ENCODE measurements at regions of chr21 and their contacts with region 1.

Region 1: GRCh38 chr21:31088315-31088714 is 50.0 kb upstream of the KRTAP19-8 start:
- DNase-seq: peak in 1 of 5 donors; percentile 26
- ATAC-seq: no peak
- H3K4me3 ChIP-seq: no peak overlapping the region
- H3K27ac ChIP-seq: no peak overlapping the region
- H3K4me1 ChIP-seq: peaks cover 0 to 5% (median 0%) of the 10 kb centered on the region in 12 donors
- H3K27me3 ChIP-seq: peaks cover 0 to 2% (median 0%) of the 10 kb centered on the region in 9 donors
- CTCF ChIP-seq: no peak
- POLR2A ChIP-seq: no peak

Region 2: GRCh38 chr21:30044445-30045064 is 1043.8 kb before region 1 on chr21:
- intact Hi-C with region 1: loop called in 7 of 10 experiments (anchors 5 to 10 kb)
- DNase-seq: no peak
- ATAC-seq: no peak
- H3K4me3 ChIP-seq: no peak overlapping the region
- H3K27ac ChIP-seq: no peak overlapping the region
- H3K4me1 ChIP-seq: no peaks in the 10 kb centered on the region
- H3K27me3 ChIP-seq: no peaks in the 10 kb centered on the region
- CTCF ChIP-seq: peak; percentile 64 to 91 (median 80)
- POLR2A ChIP-seq: no peak

Region 3: GRCh38 chr21:30340441-30341241 is 747.7 kb before region 1 on chr21:
- intact Hi-C with region 1: loop called in 9 of 10 experiments (anchors 2 to 10 kb)
- DNase-seq: peak in 2 of 5 donors; percentile 23 to 25
- ATAC-seq: no peak
- H3K4me3 ChIP-seq: no peak overlapping the region
- H3K27ac ChIP-seq: no peak overlapping the region
- H3K4me1 ChIP-seq: no peaks in the 10 kb centered on the region
- H3K27me3 ChIP-seq: no peaks in the 10 kb centered on the region
- CTCF ChIP-seq: peak; percentile 70 to 86 (median 81)
- POLR2A ChIP-seq: no peak

Region 4: GRCh38 chr21:30444204-30444603 is 644.1 kb before region 1 on chr21:
- intact Hi-C with region 1: loop called in 7 of 10 experiments (anchors 5 to 10 kb)
- DNase-seq: peak in 1 of 5 donors; percentile 30
- ATAC-seq: peak; percentile 64 to 89 (median 82)
- H3K4me3 ChIP-seq: no peak overlapping the region
- H3K27ac ChIP-seq: no peak overlapping the region
- H3K4me1 ChIP-seq: no peaks in the 10 kb centered on the region
- H3K27me3 ChIP-seq: no peaks in the 10 kb centered on the region
- CTCF ChIP-seq: peak in 10 of 12 donors; percentile 5 to 53 (median 37)
- POLR2A ChIP-seq: no peak

Region 5: GRCh38 chr21:30831194-30831765 is 257.0 kb before region 1 on chr21:
- intact Hi-C with region 1: loop called (anchors 1 to 10 kb)
- DNase-seq: no peak
- ATAC-seq: no peak
- H3K4me3 ChIP-seq: no peak overlapping the region
- H3K27ac ChIP-seq: no peak overlapping the region
- H3K4me1 ChIP-seq: no peaks in the 10 kb centered on the region
- H3K27me3 ChIP-seq: no peaks in the 10 kb centered on the region
- CTCF ChIP-seq: peak; percentile 17 to 65 (median 46)
- POLR2A ChIP-seq: no peak

Region 6: GRCh38 chr21:30839304-30839703 is 249.0 kb before region 1 on chr21:
- intact Hi-C with region 1: loop called in 7 of 10 experiments (anchors 5 to 10 kb)
- DNase-seq: no peak
- ATAC-seq: no peak
- H3K4me3 ChIP-seq: no peak overlapping the region
- H3K27ac ChIP-seq: no peak overlapping the region
- H3K4me1 ChIP-seq: no peaks in the 10 kb centered on the region
- H3K27me3 ChIP-seq: no peaks in the 10 kb centered on the region
- CTCF ChIP-seq: peak in 4 of 12 donors; percentile 8 to 35 (median 18)
- POLR2A ChIP-seq: no peak

Region 7: DNA sequence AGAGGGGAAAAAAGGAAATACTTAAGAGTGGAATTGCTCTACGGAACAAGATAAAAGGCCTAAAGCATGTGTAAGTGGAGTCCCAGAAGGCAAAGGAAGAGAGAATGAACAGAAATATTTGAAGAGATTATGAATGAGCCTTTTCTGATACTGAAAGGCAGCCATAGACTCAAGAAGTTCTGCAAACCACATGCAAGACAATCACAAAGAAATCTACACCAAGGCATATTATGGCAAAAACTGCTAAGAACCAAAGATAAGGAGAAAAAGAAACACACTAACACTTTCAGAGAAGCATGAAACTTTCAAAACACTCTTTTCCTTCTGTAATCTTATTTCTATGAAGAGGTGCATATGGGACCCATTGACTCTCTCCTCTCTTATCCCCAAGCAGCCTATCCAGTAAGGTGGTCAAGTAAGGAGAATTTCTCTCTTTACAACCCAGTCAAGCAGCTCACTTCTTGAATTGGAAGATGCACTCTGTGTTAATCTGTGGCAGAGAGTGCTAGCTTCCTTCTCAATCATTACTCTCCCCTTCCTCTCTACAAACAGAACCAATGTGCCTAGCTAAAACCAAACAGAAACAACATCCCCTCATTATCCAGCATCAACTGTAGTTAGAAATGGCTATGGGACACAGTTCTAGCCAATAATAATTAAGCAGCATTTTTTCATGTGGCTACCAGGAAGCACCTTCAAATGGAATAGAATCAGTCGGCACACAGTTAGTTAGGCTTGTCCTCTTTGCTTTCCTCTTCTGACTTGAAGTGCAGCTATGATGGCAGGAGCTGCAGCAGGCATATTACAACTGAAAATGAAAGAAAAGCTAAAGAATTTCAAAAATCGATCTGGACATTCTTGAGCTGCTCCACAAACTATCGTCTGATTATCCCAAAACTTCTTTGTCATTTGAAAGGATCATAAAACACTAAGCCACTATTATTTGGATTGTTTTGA is 75.9 kb before region 1 on chr21:
- intact Hi-C with region 1: no loop called
- DNase-seq: no peak
- ATAC-seq: no peak
- H3K4me3 ChIP-seq: no peak overlapping the region
- H3K27ac ChIP-seq: no peak overlapping the region
- H3K4me1 ChIP-seq: no peaks in the 10 kb centered on the region
- H3K27me3 ChIP-seq: no peaks in the 10 kb centered on the region
- CTCF ChIP-seq: no peak
- POLR2A ChIP-seq: no peak